ENCODE measurements at regions of chr19 and their contacts with region 1.

Region 1: DNA sequence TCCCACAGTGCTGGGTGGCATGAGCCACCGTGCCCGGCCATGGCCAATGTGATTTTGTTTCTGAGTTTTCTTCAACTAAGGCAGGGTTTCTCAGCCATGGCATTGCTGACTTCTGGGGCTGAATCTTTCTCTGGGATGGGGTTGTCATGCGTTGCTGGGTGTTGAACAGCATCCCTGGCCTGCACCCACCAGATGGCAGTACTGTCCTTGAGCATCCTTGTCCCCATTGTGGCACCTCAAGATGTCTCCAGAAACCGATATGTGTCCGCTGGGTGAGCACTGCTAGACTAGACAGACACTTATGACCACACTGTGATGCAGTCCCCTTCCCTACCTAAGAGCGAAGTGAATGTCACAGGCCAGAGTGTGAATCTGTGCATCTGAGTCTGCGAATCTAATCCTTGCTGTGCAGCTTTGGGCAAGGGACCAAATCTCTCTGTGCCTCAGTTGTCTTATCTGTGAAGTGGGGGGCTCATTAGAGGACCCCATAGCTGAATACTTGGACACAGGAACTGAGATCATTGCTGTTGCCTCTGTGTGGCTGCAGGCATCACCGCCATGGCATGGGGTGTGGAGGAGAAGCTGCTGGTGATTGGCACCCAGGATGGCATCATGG is 50.3 kb upstream of the SIN3B start:
- DNase-seq: peak; percentile 65 to 80 (median 72)
- ATAC-seq: peak; percentile 98
- H3K4me3 ChIP-seq: no peak overlapping the region
- H3K27ac ChIP-seq: no peak overlapping the region
- H3K4me1 ChIP-seq: no peaks in the 10 kb centered on the region
- H3K27me3 ChIP-seq: peaks cover 2 to 4% of the 10 kb centered on the region in 2 experiments; a peak in 2 of 5 replicates
- CTCF ChIP-seq: peak; percentile 83 to 92 (median 92)
- EP300 ChIP-seq: no peak
- POLR2A ChIP-seq: no peak
- RAD21 ChIP-seq: peak; percentile 83 to 95

Region 2: GRCh38 chr19:16637535-16637934 is 141.4 kb before region 1 on chr19:
- CTCF ChIA-PET with region 1: no interaction called
- POLR2A ChIA-PET with region 1: no interaction called
- in situ Hi-C with region 1: no loop called
- intact Hi-C with region 1: no loop called
- DNase-seq: no peak
- ATAC-seq: no peak
- H3K4me3 ChIP-seq: no peak overlapping the region
- H3K27ac ChIP-seq: no peak overlapping the region
- H3K4me1 ChIP-seq: no peaks in the 10 kb centered on the region; a peak in 1 of 5 replicates
- H3K27me3 ChIP-seq: no peaks in the 10 kb centered on the region
- CTCF ChIP-seq: no peak
- EP300 ChIP-seq: no peak
- POLR2A ChIP-seq: no peak
- RAD21 ChIP-seq: no peak

Region 3: DNA sequence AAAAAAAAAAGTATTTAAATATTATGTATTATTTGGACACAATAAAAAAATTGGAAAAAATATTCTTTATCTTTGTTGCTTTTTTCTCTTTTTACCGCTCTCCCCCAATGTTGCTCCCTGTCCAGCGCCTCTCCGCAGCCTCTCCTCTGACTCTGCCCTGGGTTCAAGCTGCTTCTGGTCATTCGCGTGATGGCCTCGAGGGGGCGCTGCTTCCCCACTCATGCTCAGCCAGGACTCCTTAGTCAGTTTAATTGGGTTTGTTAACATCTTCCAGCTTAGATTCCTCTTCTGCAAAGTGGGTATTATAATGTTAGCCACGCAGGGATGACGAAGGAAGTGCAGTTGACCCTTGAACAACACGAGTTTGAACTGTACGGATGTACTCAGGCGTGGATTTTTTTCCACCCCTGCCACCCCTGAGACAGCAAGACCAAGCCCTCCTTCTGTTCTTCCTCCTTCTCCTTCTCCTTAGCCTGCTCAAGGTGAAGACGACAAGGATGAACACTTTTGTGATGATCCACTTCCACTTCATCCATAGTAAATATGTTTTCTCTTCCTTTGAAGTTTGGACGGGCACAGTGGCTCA is 64.1 kb before region 1 on chr19:
- CTCF ChIA-PET with region 1: interaction called, 4 read pairs
- POLR2A ChIA-PET with region 1: no interaction called
- in situ Hi-C with region 1: no loop called
- intact Hi-C with region 1: loop called (anchors 1 kb)
- DNase-seq: peak; percentile 65 to 81 (median 78)
- ATAC-seq: peak; percentile 97
- H3K4me3 ChIP-seq: no peak overlapping the region
- H3K27ac ChIP-seq: no peak overlapping the region
- H3K4me1 ChIP-seq: no peaks in the 10 kb centered on the region
- H3K27me3 ChIP-seq: peaks cover 0 to 4% of the 10 kb centered on the region in 2 experiments; a peak in 2 of 5 replicates
- CTCF ChIP-seq: peak; percentile 80 to 96 (median 86)
- EP300 ChIP-seq: no peak
- POLR2A ChIP-seq: no peak
- RAD21 ChIP-seq: peak; percentile 57 to 81

Region 4: GRCh38 chr19:17001603-17002183 is 222.8 kb after region 1 on chr19:
- CTCF ChIA-PET with region 1: no interaction called
- POLR2A ChIA-PET with region 1: no interaction called
- in situ Hi-C with region 1: no loop called
- intact Hi-C with region 1: no loop called
- DNase-seq: peak in 2 of 4 experiments; percentile 46 to 48
- ATAC-seq: peak; percentile 60
- H3K4me3 ChIP-seq: no peak overlapping the region
- H3K27ac ChIP-seq: no peak overlapping the region
- H3K4me1 ChIP-seq: peaks cover 0 to 8% of the 10 kb centered on the region in 2 experiments; a peak in 3 of 5 replicates
- H3K27me3 ChIP-seq: peaks cover 7 to 41% of the 10 kb centered on the region in 2 experiments
- CTCF ChIP-seq: no peak
- EP300 ChIP-seq: no peak
- POLR2A ChIP-seq: no peak
- RAD21 ChIP-seq: no peak

Region 5: DNA sequence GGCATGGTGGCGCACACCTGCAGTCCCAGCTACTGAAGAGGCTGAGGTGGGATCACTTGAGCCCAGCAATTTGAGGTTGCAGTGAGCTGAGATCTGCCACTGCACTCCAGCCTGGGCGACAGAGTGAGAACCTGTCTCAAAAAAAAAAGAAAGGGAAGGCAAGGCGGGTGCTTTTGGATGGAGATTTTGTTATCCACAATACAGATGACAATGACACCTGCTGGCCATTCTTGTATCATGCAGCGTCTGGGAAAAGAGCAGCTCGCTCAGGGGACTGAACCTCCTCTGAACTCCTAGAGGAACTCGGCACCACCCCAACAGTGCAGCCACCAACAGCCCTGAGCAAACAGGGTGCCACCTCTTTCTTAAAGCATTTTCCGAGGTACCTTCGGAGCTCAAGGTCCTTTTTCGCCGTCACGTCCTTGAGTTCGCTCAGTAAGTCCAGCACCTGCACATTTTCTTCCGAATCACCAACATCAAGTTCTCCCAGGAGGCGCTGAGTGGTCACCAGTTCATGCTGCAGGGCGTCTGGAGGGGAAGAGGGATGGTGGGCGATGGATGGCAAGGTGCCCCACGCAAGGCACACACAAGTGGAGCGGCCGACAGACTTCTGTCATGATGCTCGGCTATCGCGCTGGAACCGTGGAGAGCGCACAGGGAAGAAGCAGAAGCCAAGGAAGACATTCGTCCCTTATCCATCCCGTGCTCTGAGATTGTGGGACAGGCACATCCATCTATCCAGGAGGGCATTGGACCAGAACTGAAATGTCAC is 273.7 kb after region 1 on chr19:
- CTCF ChIA-PET with region 1: interaction called, 11 read pairs
- POLR2A ChIA-PET with region 1: interaction called, 3 read pairs
- in situ Hi-C with region 1: no loop called
- intact Hi-C with region 1: loop called (anchors 5 kb)
- DNase-seq: peak in 2 of 4 experiments; percentile 39 to 48
- ATAC-seq: peak; percentile 63
- H3K4me3 ChIP-seq: no peak overlapping the region
- H3K27ac ChIP-seq: no peak overlapping the region
- H3K4me1 ChIP-seq: no peaks in the 10 kb centered on the region
- H3K27me3 ChIP-seq: no peaks in the 10 kb centered on the region
- CTCF ChIP-seq: peak; percentile 32 to 65 (median 53)
- EP300 ChIP-seq: no peak
- POLR2A ChIP-seq: no peak
- RAD21 ChIP-seq: peak; percentile 21 to 44; a peak in 2 of 4 replicates

Measured in K562 (cell line).